Right ventricle myocardium inferior (tissue), 1 donor: ENCODE measurements at regions of chr2 and their contacts with region 1.

Region 1: GRCh38 chr2:174465327-174465726 is 21.5 kb downstream of the GPR155 start:
- DNase-seq: no peak
- ATAC-seq: no peak

Region 2: DNA sequence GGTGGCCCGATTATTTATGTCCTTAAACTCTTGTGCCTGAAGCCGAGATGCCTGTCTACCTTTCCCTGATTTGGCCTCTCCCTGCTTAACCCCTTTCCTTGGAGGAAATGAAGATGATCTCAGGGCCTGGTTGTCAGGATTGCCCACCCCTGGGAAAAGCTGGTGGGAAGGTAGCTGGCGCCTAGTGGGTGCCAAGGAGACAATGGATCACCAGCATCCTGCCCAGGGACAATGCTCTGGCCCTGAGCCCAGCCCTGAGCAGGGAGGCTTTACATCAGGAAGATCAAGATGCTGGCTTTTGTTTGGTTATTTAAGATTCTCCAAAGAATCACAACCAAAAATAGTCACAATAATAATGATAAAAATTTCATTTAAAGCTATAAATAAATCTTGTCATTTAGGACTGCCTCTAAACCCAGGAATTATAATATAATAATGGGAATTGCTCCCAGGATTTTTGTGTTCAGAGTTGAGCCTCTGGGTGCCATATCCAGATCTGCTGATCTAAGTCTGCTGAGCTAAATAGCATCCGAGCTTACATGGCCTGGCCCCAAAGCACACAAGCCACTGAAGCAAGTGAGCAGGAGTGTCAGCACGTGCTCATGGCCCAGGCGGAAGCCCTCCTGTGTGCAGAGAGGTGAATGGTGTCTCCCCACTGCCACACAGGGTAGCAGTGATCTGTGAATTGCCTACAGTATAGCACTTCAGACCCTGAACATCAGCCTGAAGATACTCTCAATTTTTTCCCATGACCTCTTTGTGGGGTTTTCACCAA is 1447.5 kb before region 1 on chr2:
- intact Hi-C with region 1: no loop called
- DNase-seq: no peak
- ATAC-seq: no peak

Region 3: DNA sequence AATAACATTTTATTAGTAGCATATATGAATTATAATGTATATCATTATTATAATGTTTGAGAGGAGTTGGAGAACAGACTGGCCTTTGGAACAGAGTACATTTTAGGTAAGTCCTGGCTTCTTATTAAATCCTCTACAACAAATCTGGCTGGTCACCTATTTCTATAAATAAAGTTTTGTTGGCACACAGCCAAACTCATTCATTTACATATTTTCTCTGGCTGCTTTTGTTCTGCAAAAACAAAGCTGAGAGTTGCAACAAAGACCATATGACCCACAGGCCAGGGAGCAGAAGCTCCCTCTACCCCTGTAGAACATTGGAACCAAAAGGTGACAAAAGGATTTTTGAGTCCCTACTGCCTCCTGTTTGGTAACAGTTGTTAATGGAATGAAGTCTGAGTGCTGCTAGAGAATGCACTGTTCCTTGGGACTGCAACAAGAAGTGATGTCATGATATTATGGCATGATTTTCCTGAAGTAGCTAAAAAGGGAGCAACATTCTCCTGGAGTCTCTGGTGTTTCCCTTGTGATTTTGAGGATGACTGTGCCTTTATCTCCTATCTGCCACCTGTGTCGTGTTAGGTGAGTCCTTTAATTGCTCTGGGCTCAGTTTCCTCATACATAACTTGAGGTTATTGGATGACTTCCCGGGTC is 152.6 kb before region 1 on chr2:
- intact Hi-C with region 1: no loop called
- DNase-seq: no peak
- ATAC-seq: no peak

Region 4: DNA sequence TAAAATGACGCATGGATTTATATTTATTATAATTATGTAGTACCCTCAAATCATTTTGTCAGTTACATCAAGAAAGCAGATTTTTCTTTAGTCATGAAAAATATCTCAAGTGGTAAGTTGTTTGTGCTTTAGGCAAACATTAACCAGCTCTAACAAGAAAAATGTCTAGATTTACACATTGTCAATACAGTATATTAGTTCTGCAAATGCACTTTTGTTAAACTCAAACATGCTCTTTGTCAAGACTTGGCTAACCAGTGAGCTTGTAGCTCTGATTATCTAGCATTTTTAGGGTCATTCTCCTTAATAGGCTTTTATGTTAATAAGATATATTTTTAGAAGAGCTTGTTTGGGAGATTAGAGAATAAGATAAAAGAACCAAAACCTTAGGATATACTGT is 37.1 kb before region 1 on chr2:
- intact Hi-C with region 1: no loop called
- DNase-seq: no peak
- ATAC-seq: no peak

Region 5: GRCh38 chr2:174522553-174522952 is 57.2 kb after region 1 on chr2:
- intact Hi-C with region 1: loop called (anchors 5 kb)
- DNase-seq: no peak
- ATAC-seq: peak; percentile 23

Region 6: GRCh38 chr2:174603280-174603679 is 138.0 kb after region 1 on chr2:
- intact Hi-C with region 1: loop called (anchors 2 kb)
- DNase-seq: no peak
- ATAC-seq: peak; percentile 87

Region 7: DNA sequence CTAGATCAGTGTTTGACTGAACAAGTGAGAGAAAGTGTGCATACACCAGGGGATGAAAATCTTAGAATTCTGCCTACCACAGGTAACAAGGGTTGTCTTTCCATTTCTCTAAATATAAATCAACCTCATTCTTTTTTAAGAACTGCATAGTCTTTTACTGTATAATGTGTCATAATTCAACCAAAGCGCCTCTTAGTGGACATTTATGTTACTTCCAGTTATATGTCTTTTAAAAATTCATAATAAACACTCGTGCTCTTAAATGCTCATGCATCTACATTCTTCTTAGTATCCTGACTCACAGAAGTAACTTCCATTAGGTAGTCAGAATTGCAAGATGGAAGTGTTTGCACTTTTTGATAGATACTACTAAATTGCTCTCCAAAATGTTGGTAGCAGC is 222.8 kb after region 1 on chr2:
- intact Hi-C with region 1: loop called (anchors 5 kb)
- DNase-seq: no peak
- ATAC-seq: no peak